Endothelial cell of umbilical vein (primary cell): ENCODE measurements at regions of chr6 and their contacts with region 1.

Region 1: GRCh38 chr6:47126647-47127391 is 84.7 kb upstream of the ADGRF1 start:
- DNase-seq: peak; percentile 51
- H3K4me3 ChIP-seq: no peak overlapping the region
- H3K27ac ChIP-seq: no peak overlapping the region
- H3K4me1 ChIP-seq: peaks cover 2% of the 10 kb centered on the region
- H3K27me3 ChIP-seq: no peaks in the 10 kb centered on the region
- CTCF ChIP-seq: no peak
- POLR2A ChIP-seq: no peak

Region 2: DNA sequence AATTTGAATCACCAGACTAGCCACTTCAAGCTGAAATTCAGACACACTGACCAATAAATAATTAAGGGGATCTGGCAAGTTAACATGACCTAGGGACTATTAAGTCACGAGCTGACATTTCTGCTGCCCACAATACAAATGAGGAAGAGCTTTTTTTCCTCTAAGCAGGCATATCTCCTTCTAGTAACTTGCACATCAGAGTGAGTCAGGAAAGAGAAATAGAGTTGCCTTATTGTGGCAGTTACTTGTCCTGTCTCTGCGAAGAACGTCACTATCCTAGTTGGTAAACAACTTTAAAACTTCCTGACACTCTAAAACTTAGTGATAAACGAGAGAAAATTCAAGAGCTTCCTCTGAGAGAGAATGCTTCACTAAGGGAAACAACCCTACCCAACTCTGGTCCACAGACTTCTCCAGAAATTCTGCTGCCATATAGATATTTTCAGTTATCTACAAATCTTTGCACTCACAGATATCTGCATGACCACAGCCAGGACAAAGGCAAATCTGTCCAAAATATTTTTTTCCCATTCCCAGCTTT is 395.8 kb before region 1 on chr6:
- CTCF ChIA-PET with region 1: no interaction called
- POLR2A ChIA-PET with region 1: no interaction called
- dilution Hi-C with region 1: no loop called
- intact Hi-C with region 1: no loop called
- DNase-seq: no peak
- H3K4me3 ChIP-seq: no peak overlapping the region
- H3K27ac ChIP-seq: no peak overlapping the region
- H3K4me1 ChIP-seq: peaks cover 5% of the 10 kb centered on the region
- H3K27me3 ChIP-seq: peaks cover 26 to 46% of the 10 kb centered on the region in 2 experiments
- CTCF ChIP-seq: no peak
- POLR2A ChIP-seq: no peak

Region 3: GRCh38 chr6:47147836-47148344 is 21.1 kb after region 1 on chr6:
- CTCF ChIA-PET with region 1: no interaction called
- POLR2A ChIA-PET with region 1: no interaction called
- dilution Hi-C with region 1: no loop called
- intact Hi-C with region 1: loop called (anchors 2 kb)
- DNase-seq: no peak
- H3K4me3 ChIP-seq: no peak overlapping the region
- H3K27ac ChIP-seq: no peak overlapping the region
- H3K4me1 ChIP-seq: no peaks in the 10 kb centered on the region
- H3K27me3 ChIP-seq: peaks cover 0 to 4% of the 10 kb centered on the region in 2 experiments
- CTCF ChIP-seq: no peak
- POLR2A ChIP-seq: no peak

Region 4: DNA sequence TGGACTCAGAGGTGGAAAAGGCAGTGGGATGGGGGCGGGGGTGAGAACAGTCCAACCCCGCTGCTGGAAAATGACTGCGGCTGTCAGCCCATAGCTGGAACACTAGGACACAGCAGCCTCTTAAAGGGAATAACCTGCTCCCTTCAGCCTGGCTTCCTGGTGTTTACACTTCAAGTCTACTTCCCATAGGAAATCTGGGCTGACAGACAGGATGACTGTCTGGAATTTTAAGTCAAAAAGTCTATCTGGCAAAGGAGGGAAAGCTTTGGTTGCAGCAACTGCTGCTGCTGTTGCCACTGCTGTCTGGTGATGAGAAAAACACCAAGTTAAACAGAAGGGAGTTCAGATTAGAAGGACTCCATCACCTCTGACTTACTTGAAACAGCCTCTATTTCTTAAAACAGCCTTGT is 138.0 kb after region 1 on chr6:
- CTCF ChIA-PET with region 1: no interaction called
- POLR2A ChIA-PET with region 1: no interaction called
- dilution Hi-C with region 1: no loop called
- intact Hi-C with region 1: no loop called
- DNase-seq: peak; percentile 97
- H3K4me3 ChIP-seq: no peak overlapping the region
- H3K27ac ChIP-seq: peak overlapping the region; percentile 76
- H3K4me1 ChIP-seq: peaks cover 63% of the 10 kb centered on the region
- H3K27me3 ChIP-seq: no peaks in the 10 kb centered on the region
- CTCF ChIP-seq: no peak
- POLR2A ChIP-seq: no peak